ENCODE measurements at regions of chr3 and their contacts with region 1.

Region 1: GRCh38 chr3:40505599-40506462 is at the start of gene ZNF620:
- DNase-seq: peak; percentile 1 to 74 (median 48)
- ATAC-seq: peak; percentile 81
- H3K4me3 ChIP-seq: peak within 1 kb of the TSS; percentile 71 to 83
- H3K4me3 Mint-ChIP-seq: peak within 1 kb of the TSS; percentile 97
- H3K27ac ChIP-seq: peak within 1 kb of the TSS; percentile 32 to 46
- H3K27ac Mint-ChIP-seq: peak within 1 kb of the TSS; percentile 89
- H3K4me1 ChIP-seq: peaks cover 6% of the 10 kb centered on the region
- H3K4me1 Mint-ChIP-seq: peaks cover 15% of the 10 kb centered on the region
- H3K27me3 ChIP-seq: no peaks in the 10 kb centered on the region
- H3K27me3 Mint-ChIP-seq: no peaks in the 10 kb centered on the region
- CTCF ChIP-seq: peak; percentile 18
- total RNA-seq, gene ZNF620: 0.84 to 1.9 TPM

Region 2: GRCh38 chr3:40476478-40477470 is 29.1 kb before region 1 on chr3 and contains the start of gene ZNF619:
- CTCF ChIA-PET with region 1: interaction called, 3 read pairs
- POLR2A ChIA-PET with region 1: interaction called, 4 read pairs
- intact Hi-C with region 1: loop called in 1 of 2 experiments (anchors 2 kb)
- DNase-seq: peak; percentile 27 to 82 (median 57)
- ATAC-seq: peak; percentile 91
- H3K4me3 ChIP-seq: peak within 1 kb of the TSS; percentile 78 to 90
- H3K4me3 Mint-ChIP-seq: peak within 1 kb of the TSS; percentile 86
- H3K27ac ChIP-seq: peak within 1 kb of the TSS; percentile 65 to 79
- H3K27ac Mint-ChIP-seq: peak within 1 kb of the TSS; percentile 84
- H3K4me1 ChIP-seq: peaks cover 10% of the 10 kb centered on the region
- H3K4me1 Mint-ChIP-seq: peaks cover 25% of the 10 kb centered on the region
- H3K27me3 ChIP-seq: no peaks in the 10 kb centered on the region
- H3K27me3 Mint-ChIP-seq: no peaks in the 10 kb centered on the region
- CTCF ChIP-seq: no peak
- total RNA-seq, gene ZNF619: 2.2 to 4.1 TPM

Region 3: GRCh38 chr3:40546816-40547215 is 41.0 kb after region 1 on chr3:
- CTCF ChIA-PET with region 1: no interaction called
- POLR2A ChIA-PET with region 1: no interaction called
- intact Hi-C with region 1: no loop called
- DNase-seq: no peak
- ATAC-seq: no peak
- H3K4me3 ChIP-seq: no peak overlapping the region
- H3K4me3 Mint-ChIP-seq: no peak overlapping the region
- H3K27ac ChIP-seq: no peak overlapping the region
- H3K27ac Mint-ChIP-seq: no peak overlapping the region
- H3K4me1 ChIP-seq: no peaks in the 10 kb centered on the region
- H3K4me1 Mint-ChIP-seq: no peaks in the 10 kb centered on the region
- H3K27me3 ChIP-seq: no peaks in the 10 kb centered on the region
- H3K27me3 Mint-ChIP-seq: peaks cover 4% of the 10 kb centered on the region
- CTCF ChIP-seq: no peak